H1 (cell line): ENCODE measurements at regions of chr22 and their contacts with region 1.

Region 1: GRCh38 chr22:50576070-50576469 is 2.2 kb downstream of the CPT1B start:
- DNase-seq: no peak
- H3K4me3 ChIP-seq: no peak overlapping the region
- H3K27ac ChIP-seq: no peak overlapping the region
- H3K4me1 ChIP-seq: no peaks in the 10 kb centered on the region
- H3K27me3 ChIP-seq: no peaks in the 10 kb centered on the region
- CTCF ChIP-seq: peak; percentile 40 to 93 (median 60)
- EP300 ChIP-seq: no peak
- POLR2A ChIP-seq: no peak
- RAD21 ChIP-seq: peak; percentile 75 to 79

Region 2: DNA sequence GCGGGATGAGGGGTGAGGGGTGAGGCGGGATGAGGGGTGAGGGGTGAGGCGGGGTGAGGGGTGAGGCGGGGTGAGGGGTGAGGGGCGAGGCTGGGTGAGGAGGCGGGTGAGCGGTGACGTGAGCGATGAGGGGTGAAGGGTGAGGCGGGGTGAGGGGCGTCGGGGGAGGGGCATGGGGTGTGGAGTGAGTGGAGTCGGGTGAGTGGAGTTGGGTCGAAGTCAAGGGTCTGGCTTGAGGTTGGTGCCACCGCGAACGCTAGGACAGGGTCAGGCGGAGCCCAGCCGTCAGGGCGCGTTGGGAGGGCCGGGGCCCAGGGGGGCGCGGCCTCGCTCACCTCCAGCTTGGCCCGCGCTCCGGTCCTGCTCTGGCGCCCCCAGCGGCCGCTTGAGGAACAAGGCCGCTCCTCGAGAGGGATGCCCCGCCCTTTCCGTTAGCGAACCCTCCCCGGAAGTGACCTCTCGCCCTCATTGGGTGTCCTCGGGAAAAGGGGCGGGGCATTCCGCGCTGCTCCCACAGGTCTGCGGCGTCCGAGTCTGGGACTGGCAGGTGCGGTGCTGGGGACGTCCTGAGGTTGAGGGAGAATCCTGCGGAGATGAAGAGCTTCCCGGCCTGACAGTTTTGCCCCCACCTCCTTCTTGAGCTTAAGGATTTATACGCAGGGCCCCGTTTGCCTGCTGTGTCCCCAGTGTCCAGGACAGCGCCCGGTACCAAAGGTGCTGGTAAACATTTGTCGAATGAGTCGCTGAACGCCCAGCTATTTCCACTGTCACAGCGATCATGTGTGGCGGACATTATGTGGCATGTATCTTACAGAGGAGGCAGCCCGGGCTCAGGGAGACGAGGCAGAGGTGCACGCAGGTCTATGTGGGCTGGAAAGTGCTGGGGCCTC is 13.3 kb before region 1 on chr22 and contains the start of gene SYCE3:
- CTCF ChIA-PET with region 1: interaction called, 84 read pairs
- POLR2A ChIA-PET with region 1: interaction called, 37 read pairs
- DNase-seq: peak; percentile 88 to 100
- H3K4me3 ChIP-seq: peak within 1 kb of the TSS; percentile 33 to 77 (median 71); a peak in 7 of 8 replicates
- H3K27ac ChIP-seq: no peak within 1 kb of the TSS
- H3K4me1 ChIP-seq: peaks cover 0 to 3% (median 0%) of the 10 kb centered on the region in 4 experiments; a peak in 2 of 7 replicates
- H3K27me3 ChIP-seq: peaks cover 0 to 5% (median 3%) of the 10 kb centered on the region in 4 experiments; a peak in 5 of 7 replicates
- CTCF ChIP-seq: peak; percentile 81 to 88 (median 84)
- EP300 ChIP-seq: no peak
- POLR2A ChIP-seq: no peak
- RAD21 ChIP-seq: peak; percentile 55 to 69; a peak in 3 of 4 replicates
- total RNA-seq, gene SYCE3: not detected in 2 replicates

Region 3: GRCh38 chr22:50612528-50613221 is 36.6 kb after region 1 on chr22:
- CTCF ChIA-PET with region 1: interaction called, 23 read pairs
- POLR2A ChIA-PET with region 1: interaction called, 4 read pairs
- DNase-seq: peak in 1 of 2 experiments; percentile 66
- H3K4me3 ChIP-seq: no peak overlapping the region
- H3K27ac ChIP-seq: no peak overlapping the region
- H3K4me1 ChIP-seq: peaks cover 0 to 13% (median 2%) of the 10 kb centered on the region in 4 experiments; a peak in 4 of 7 replicates
- H3K27me3 ChIP-seq: peaks cover 0 to 9% (median 7%) of the 10 kb centered on the region in 4 experiments; a peak in 6 of 7 replicates
- CTCF ChIP-seq: no peak
- EP300 ChIP-seq: no peak
- POLR2A ChIP-seq: no peak
- RAD21 ChIP-seq: no peak

Region 4: DNA sequence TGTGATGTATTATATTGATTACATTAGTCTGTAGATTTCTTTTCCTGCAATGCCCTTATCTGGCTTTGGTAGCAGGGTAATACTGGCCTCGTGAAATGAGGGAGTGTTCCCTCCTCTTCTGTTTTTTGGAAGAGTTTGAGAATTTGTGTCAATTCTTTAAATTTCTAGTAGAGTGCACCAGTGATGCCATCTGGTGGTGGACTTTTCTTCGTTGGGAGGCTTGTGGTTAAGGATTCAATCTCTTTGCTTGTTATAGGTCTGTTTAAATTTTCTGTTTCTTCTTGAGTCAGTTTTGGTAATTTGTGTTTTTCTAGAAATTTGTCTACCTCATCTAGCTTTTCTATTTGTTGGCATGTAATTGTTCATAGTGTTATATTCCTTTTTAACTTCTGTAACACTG is 115.5 kb after region 1 on chr22:
- CTCF ChIA-PET with region 1: interaction called, 36 read pairs
- POLR2A ChIA-PET with region 1: no interaction called
- DNase-seq: peak in 1 of 2 experiments; percentile 48
- H3K4me3 ChIP-seq: no peak overlapping the region
- H3K27ac ChIP-seq: no peak overlapping the region
- H3K4me1 ChIP-seq: no peaks in the 10 kb centered on the region
- H3K27me3 ChIP-seq: peaks cover 0 to 2% (median under 1%) of the 10 kb centered on the region in 4 experiments; a peak in 2 of 7 replicates
- CTCF ChIP-seq: peak in 2 of 3 experiments; percentile 67 to 68; a peak in 3 of 4 replicates
- EP300 ChIP-seq: no peak
- POLR2A ChIP-seq: no peak
- RAD21 ChIP-seq: peak; percentile 76 to 78